Posterior vena cava (tissue), 2 donors: ENCODE measurements at regions of chr5 and their contacts with region 1.

Region 1: GRCh38 chr5:169804861-169805260 is 167.8 kb downstream of the DOCK2 start:
- DNase-seq: no peak

Region 2: DNA sequence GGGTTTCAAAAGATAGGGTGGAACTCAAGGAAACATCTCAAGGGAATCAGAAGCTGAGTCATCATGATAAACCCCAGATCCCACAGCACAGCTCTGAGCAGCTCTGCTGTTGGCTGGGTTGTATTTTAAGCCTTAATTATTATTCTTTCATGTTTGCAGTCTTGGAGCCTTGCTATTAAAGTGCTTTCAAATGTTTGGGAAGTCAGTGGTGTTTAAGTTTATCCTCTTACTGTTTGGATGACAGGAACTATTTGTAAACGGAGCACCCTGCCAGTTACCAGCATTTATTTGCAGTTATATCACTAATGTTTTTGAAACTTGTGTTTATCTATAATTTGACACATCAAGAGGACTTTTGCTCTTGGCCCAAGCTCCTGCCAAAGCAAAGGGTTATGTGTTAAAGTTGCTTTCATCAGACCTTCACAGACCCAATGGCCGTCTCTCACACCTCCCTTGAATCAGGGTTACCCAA is 362.4 kb before region 1 on chr5:
- intact Hi-C with region 1: no loop called
- DNase-seq: no peak

Region 3: DNA sequence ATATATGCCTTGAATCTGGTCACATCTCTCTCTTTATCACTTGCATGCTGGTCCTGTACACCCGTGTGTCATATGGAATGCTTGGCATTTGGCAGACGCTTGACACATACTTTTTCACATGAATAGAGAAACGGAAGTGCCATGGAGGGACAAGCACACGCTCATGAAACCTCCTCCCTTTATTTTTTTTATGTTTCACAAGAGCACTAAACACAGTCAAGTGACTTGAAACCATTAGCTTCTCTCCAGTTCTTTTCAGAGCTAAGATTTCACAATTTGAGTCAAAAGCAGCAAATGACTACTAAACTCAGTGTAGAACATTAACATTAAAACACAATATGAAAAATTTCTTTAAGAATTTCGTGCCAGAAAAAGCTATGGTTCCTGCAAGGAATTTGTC is 16.7 kb before region 1 on chr5:
- intact Hi-C with region 1: loop called in 1 of 2 experiments (anchors 1 kb)
- DNase-seq: no peak